Calu3 (cell line): ENCODE measurements at regions of chr13 and their contacts with region 1.

Region 1: GRCh38 chr13:40596484-40596883 is 70.0 kb downstream of the FOXO1 start:
- DNase-seq: no peak
- H3K4me3 Mint-ChIP-seq: no peak overlapping the region
- H3K27ac Mint-ChIP-seq: no peak overlapping the region
- H3K4me1 Mint-ChIP-seq: peaks cover 39% of the 10 kb centered on the region
- H3K27me3 Mint-ChIP-seq: no peaks in the 10 kb centered on the region
- CTCF ChIP-seq: no peak

Region 2: GRCh38 chr13:40275636-40276035 is 320.8 kb before region 1 on chr13:
- CTCF ChIA-PET with region 1: no interaction called
- intact Hi-C with region 1: loop called (anchors 5 kb)
- DNase-seq: no peak
- H3K4me3 Mint-ChIP-seq: no peak overlapping the region
- H3K27ac Mint-ChIP-seq: peak overlapping the region; percentile 24
- H3K4me1 Mint-ChIP-seq: peaks cover 28% of the 10 kb centered on the region
- H3K27me3 Mint-ChIP-seq: no peaks in the 10 kb centered on the region
- CTCF ChIP-seq: no peak

Region 3: GRCh38 chr13:40388617-40389016 is 207.9 kb before region 1 on chr13:
- CTCF ChIA-PET with region 1: no interaction called
- intact Hi-C with region 1: no loop called
- DNase-seq: no peak
- H3K4me3 Mint-ChIP-seq: no peak overlapping the region
- H3K27ac Mint-ChIP-seq: no peak overlapping the region
- H3K4me1 Mint-ChIP-seq: peaks cover 11% of the 10 kb centered on the region
- H3K27me3 Mint-ChIP-seq: no peaks in the 10 kb centered on the region
- CTCF ChIP-seq: no peak

Region 4: DNA sequence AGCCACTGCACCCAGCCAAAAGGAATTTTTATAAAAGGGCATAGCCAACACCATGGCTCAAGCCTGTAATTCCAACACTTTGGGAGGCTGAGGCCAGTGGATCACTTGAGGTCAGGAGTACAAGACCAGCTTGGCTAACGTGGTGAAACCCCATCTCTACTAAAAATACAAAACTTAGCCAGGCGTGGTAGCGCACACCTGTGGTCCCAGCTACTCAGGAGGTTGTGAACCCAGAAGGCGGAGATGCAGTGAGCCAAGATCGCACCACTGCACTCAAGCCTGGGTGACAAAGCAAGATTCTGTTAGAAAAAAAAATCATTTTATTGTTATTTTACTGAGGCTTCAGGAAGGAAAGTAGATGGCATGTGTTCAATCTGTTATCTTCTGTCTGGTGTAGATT is 101.2 kb after region 1 on chr13:
- CTCF ChIA-PET with region 1: no interaction called
- intact Hi-C with region 1: no loop called
- DNase-seq: no peak
- H3K4me3 Mint-ChIP-seq: no peak overlapping the region
- H3K27ac Mint-ChIP-seq: no peak overlapping the region
- H3K4me1 Mint-ChIP-seq: no peaks in the 10 kb centered on the region
- H3K27me3 Mint-ChIP-seq: no peaks in the 10 kb centered on the region
- CTCF ChIP-seq: no peak